B cell (primary cell): ENCODE measurements at regions of chr10 and their contacts with region 1.

Region 1: DNA sequence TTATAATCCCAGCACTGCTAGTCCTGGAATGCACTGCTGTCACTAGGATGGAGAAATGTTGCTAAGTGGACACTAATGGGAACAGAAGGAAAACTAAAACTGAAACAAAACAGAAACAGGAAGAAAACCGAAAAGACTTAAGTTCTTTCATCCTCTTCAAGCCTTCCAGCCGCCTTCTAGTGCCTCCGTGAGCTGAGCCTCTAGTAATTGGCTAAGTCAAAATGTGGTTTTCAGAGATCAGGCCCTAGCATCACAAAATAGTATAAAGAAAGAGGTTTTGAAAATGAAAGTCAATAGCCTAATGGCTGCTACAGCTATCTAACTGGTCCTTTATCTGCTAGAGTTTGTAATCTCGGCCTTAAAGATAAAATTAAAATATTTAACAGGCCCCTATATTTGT is 253.9 kb upstream of the SORCS1 start:
- DNase-seq: peak; percentile 51
- ATAC-seq: no peak
- H3K4me3 ChIP-seq: peak overlapping the region in 1 of 5 experiments; percentile 29
- H3K4me3 Mint-ChIP-seq: peak overlapping the region; percentile 75
- H3K27ac ChIP-seq: peak overlapping the region in 1 of 2 donors; percentile 40
- H3K27ac Mint-ChIP-seq: peak overlapping the region; percentile 76
- H3K4me1 ChIP-seq: peaks cover 15 to 42% of the 10 kb centered on the region in 2 donors
- H3K4me1 Mint-ChIP-seq: peaks cover 15% of the 10 kb centered on the region
- H3K27me3 ChIP-seq: no peaks in the 10 kb centered on the region
- H3K27me3 Mint-ChIP-seq: no peaks in the 10 kb centered on the region
- CTCF ChIP-seq: no peak

Region 2: DNA sequence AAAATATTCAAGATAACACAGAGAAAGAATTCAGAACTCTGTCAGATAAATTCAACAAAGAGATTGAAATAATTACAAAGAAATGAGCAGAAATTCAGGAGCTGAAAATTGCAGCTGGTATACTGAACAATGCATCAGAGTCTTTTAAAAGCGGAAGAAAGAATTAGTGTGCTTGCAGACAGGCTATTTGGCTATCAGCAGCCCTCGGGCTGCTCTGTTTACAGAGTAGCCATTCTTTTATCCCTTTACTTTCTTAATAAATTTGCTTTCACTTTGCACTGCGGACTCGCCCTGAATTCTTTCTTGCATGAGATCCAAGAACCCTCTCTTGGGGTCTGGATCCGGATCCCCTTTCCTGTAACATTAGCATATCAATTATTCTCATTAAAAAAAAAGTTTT is 1737.4 kb before region 1 on chr10:
- CTCF ChIA-PET with region 1: no interaction called
- POLR2A ChIA-PET with region 1: no interaction called
- intact Hi-C with region 1: no loop called
- DNase-seq: no peak
- ATAC-seq: no peak
- H3K4me3 ChIP-seq: no peak overlapping the region
- H3K4me3 Mint-ChIP-seq: no peak overlapping the region
- H3K27ac ChIP-seq: no peak overlapping the region
- H3K27ac Mint-ChIP-seq: no peak overlapping the region
- H3K4me1 ChIP-seq: no peaks in the 10 kb centered on the region
- H3K4me1 Mint-ChIP-seq: no peaks in the 10 kb centered on the region
- H3K27me3 ChIP-seq: no peaks in the 10 kb centered on the region
- H3K27me3 Mint-ChIP-seq: no peaks in the 10 kb centered on the region
- CTCF ChIP-seq: no peak

Region 3: DNA sequence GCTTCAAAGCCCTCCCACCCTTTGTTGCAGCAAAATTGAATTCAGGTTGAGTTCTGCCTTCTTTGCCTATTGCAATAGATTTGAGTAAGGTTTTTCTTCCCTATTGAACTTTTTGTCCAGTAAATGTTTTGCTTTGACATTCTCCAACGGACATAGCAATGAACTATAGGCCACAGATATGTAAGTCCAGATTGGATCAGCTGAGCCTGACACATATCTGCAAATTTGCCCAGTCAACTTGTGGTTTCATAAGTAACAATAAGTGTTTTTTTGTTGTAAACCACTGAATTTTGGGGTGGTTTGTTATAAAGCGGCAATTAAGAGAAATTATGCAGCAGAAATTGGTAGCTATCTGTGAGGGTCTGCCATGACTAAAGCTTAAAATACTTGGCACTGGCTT is 78.2 kb after region 1 on chr10:
- CTCF ChIA-PET with region 1: no interaction called
- POLR2A ChIA-PET with region 1: no interaction called
- intact Hi-C with region 1: no loop called
- DNase-seq: no peak
- ATAC-seq: no peak
- H3K4me3 ChIP-seq: no peak overlapping the region
- H3K4me3 Mint-ChIP-seq: no peak overlapping the region
- H3K27ac ChIP-seq: no peak overlapping the region
- H3K27ac Mint-ChIP-seq: no peak overlapping the region
- H3K4me1 ChIP-seq: no peaks in the 10 kb centered on the region
- H3K4me1 Mint-ChIP-seq: no peaks in the 10 kb centered on the region
- H3K27me3 ChIP-seq: no peaks in the 10 kb centered on the region
- H3K27me3 Mint-ChIP-seq: no peaks in the 10 kb centered on the region
- CTCF ChIP-seq: no peak

Region 4: DNA sequence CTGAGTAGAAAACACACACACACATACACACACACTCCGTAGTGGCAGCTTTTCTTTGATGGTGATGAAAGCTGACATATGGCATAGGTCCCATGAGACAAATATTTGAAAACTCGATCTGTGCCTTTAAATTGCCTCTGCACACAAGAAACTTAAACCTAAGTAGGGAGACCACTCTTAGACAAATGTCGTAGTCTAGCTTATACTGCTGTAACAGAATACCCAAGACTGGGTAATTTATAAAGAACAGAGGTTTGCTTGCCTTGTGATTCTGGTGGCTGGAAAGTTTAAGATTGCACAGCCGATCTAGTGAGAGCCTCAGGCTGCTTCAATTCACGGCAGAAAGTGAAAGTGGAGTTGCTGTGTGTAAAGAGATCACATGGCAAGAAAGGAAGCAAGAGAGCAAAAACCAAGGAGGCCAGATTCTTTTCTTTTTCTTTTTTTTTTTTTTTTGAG is 235.5 kb after region 1 on chr10:
- CTCF ChIA-PET with region 1: no interaction called
- POLR2A ChIA-PET with region 1: no interaction called
- intact Hi-C with region 1: loop called (anchors 10 kb)
- DNase-seq: peak; percentile 68
- ATAC-seq: peak; percentile 47
- H3K4me3 ChIP-seq: peak overlapping the region in 4 of 5 experiments; percentile 27 to 62 (median 45)
- H3K4me3 Mint-ChIP-seq: peak overlapping the region; percentile 79
- H3K27ac ChIP-seq: peak overlapping the region; percentile 54 to 62
- H3K27ac Mint-ChIP-seq: peak overlapping the region; percentile 77
- H3K4me1 ChIP-seq: peaks cover 0 to 29% of the 10 kb centered on the region in 2 donors
- H3K4me1 Mint-ChIP-seq: peaks cover 17% of the 10 kb centered on the region
- H3K27me3 ChIP-seq: no peaks in the 10 kb centered on the region
- H3K27me3 Mint-ChIP-seq: no peaks in the 10 kb centered on the region
- CTCF ChIP-seq: no peak

Region 5: DNA sequence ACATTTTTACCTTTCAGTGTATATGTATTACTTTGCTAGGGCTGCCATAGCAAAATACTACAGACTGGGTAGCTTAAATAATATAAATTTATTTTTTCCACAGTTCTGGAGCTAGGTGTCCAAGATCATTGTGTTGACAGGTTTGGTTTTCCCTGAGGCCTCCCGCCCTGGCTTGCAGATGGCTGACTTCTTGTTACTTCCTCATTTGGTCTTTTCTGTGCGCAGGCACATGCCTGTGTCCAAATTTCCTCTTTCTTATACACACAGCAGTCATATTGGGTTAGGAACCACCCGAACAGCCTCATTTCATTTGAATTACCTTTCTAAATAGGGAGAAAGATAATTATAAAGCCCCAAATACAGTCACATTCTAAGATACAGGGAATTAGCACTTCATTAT is 267.7 kb after region 1 on chr10:
- CTCF ChIA-PET with region 1: no interaction called
- POLR2A ChIA-PET with region 1: no interaction called
- intact Hi-C with region 1: loop called (anchors 10 kb)
- DNase-seq: peak; percentile 74
- ATAC-seq: peak; percentile 81
- H3K4me3 ChIP-seq: peak overlapping the region in 1 of 5 experiments; percentile 9
- H3K4me3 Mint-ChIP-seq: peak overlapping the region; percentile 3
- H3K27ac ChIP-seq: peak overlapping the region; percentile 20 to 62
- H3K27ac Mint-ChIP-seq: peak overlapping the region; percentile 54
- H3K4me1 ChIP-seq: peaks cover 8 to 26% of the 10 kb centered on the region in 2 donors
- H3K4me1 Mint-ChIP-seq: peaks cover 12% of the 10 kb centered on the region
- H3K27me3 ChIP-seq: no peaks in the 10 kb centered on the region
- H3K27me3 Mint-ChIP-seq: no peaks in the 10 kb centered on the region
- CTCF ChIP-seq: no peak